HAP-1 (cell line): ENCODE measurements at regions of chr6 and their contacts with region 1.

Region 1: DNA sequence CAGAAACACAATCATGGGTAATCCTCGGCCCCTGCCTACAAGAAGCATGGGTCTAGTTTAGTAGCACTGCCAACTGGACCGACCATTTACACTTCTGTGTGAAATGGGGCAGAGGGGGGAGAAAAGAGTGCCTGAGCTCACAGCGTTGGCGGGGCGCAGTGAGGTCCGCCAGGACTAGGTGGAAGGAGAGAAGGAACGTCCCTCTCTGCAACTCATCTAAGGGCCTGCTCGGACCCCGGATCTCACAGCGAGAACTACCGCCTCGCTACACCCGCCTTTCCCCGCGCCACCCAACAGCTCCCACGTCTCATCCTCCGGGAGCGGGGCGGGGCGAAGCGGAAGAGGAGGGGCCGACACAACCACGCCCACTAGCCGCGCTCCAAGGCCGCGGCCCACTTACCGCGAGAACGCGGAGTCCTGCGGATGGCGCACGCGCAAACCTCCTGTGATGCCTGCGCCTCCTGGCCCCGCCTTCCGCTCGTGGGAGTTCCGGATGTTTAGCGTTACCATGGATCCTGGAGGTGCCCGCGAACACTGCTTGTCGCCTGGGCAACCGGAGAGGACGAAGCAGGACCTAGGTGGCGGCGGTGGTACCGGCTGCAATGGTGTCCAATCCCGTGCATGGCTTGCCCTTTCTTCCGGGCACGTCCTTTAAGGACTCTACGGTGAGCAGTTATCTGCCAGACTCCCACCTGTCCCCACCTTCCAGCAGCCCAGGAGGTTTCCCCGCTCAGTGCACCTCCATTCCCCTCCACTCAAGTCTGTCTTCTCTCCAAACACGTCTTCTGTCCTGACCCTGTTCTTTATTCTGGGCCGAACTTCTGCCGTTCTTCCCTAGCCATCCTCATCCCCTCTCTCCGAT is at the start of gene EFHC1:
- DNase-seq: peak; percentile 96 to 98
- H3K4me3 ChIP-seq: peak within 1 kb of the TSS; percentile 52
- H3K4me1 ChIP-seq: peaks cover 15% of the 10 kb centered on the region
- H3K27me3 ChIP-seq: no peaks in the 10 kb centered on the region

Region 2: DNA sequence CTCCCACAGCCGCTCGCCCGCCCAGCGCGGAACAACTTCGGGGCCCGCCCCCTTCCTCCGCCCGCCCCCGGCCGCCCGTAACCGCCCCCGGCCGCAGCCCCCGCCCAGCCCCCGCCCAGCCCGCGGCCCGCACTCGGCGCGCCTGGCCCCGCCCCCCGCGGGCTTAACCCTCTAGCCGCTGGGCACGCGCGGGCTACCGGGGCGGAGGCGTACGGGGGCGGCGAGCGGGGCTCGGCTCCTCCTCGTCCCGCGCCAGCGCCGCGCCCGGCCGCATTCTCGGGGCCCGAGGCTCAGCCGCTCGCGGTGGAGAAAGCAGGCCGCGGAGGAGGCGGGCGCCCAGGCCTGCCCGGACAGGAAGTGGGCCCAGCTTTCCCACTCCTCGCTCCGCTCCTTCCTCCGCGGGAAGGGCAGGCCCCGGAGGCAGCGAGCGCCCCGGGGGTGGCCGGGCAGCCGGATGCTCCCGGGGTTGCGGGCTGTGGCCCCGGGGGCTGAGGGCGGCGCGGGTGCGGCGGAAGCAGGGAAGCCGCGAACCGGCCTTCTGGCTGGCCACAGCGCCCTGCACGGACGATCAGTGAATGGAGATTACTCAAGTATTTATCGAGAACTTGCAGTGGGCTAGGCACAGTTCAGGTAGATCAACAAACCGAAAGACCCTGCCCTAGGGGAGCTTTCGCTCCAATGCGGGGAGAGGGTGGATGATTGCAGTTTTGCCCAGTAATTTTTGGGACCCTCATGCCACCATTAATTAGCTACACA is 157.2 kb after region 1 on chr6 and contains the start of gene TRAM2:
- in situ Hi-C with region 1: loop called (anchors 5 kb)
- DNase-seq: peak; percentile 78 to 90
- H3K4me3 ChIP-seq: peak within 1 kb of the TSS; percentile 48
- H3K4me1 ChIP-seq: peaks cover 32% of the 10 kb centered on the region
- H3K27me3 ChIP-seq: no peaks in the 10 kb centered on the region

Region 3: DNA sequence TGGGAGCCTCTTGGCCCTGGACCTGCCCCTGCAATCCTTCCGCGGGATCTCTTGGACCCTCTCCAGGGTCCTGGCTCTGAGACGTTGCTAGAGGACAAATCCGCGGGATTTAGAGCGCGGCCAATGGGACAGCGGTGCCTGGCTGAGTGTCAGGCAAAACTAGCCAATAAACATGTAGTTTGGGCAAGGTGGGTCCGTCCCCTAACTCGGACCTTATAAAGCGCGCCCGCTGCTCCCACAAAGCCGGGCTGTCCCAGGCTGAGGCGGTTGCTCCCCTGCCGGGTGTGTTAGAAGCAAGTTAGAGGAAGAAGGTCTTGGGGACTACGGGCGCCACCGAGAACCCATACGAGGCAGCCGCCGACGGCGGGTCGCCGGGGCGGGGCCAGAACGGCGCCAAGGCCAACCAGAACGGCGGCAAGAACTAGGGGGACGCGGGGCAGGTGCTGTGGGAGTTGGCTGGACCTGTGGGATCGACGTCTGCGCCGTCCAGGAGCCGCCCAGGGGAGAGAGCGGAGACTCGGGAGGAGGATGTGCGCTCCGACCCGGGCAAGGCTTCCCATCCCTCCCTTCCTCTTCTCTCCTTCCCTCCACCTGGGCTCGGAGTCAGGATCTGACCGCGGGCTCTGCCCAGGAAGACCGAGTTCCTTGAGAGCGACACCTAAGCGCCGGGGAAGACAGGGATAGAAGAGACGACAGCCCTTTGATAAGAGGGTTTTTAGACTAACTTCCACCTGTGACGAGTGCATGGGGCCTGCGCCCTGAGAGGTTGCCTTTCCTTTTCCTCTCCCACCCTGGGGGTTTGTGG is 244.3 kb after region 1 on chr6:
- in situ Hi-C with region 1: loop called (anchors 5 kb)
- DNase-seq: peak; percentile 90 to 95
- H3K4me3 ChIP-seq: peak overlapping the region; percentile 52
- H3K4me1 ChIP-seq: peaks cover 10% of the 10 kb centered on the region
- H3K27me3 ChIP-seq: no peaks in the 10 kb centered on the region